PC-3 (cell line): ENCODE measurements at regions of chr6 and their contacts with region 1.

Region 1: GRCh38 chr6:26196846-26197648 is 109.8 kb downstream of the HFE start:
- DNase-seq: peak; percentile 93
- ATAC-seq: peak; percentile 48
- H3K4me3 ChIP-seq: peak overlapping the region; percentile 93
- H3K27ac ChIP-seq: peak overlapping the region; percentile 70
- H3K4me1 ChIP-seq: peaks cover 17% of the 10 kb centered on the region; the same call in 1 of the 2 replicates
- H3K27me3 ChIP-seq: no peaks in the 10 kb centered on the region
- CTCF ChIP-seq: no peak; the same call in 1 of the 2 replicates

Region 2: DNA sequence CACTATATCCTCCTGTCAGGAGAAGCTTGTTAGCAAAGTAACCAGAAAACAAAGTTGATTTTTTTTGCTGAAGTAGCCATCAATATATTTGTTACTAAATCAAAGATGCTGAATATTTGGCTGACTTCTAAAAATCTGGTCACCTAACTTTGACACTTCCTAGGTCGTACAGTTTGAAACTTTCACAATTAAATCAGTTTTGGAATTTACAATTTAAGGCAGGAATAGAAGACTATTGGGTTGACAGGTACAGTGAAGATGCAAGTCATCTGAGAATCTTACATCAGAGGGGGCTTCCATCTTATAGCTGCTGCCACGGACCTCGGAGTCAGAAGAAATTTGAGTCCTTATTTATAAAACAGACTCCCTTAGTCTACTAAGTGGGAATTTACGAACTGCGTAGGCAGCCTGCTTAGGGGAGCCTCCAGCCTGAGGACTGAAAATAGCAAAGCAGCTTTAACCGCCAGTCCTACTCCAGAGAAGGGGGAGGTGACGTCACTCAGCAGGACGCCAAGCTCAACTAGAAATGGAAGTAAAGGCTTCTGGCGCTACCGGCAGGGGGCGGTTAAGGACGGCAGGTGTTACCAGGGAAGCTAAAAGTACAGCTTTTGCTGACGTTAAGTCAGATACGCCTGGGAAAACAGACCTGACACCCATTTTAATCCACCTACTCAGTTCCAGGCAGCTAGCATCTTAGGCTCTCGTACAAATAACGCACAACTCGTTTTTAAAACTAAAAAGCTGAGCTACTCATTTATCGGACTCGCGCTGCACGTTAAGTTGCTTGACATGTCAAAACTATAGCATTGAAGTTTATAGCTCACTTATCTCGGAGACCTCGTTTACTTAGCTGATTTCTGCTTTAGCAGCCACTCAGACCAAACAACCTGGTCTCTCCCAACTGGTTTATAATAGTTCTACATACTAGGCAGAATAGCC is 170.9 kb before region 1 on chr6:
- CTCF ChIA-PET with region 1: interaction called, 3 read pairs
- POLR2A ChIA-PET with region 1: interaction called, 4 read pairs
- intact Hi-C with region 1: loop called (anchors 5 kb)
- DNase-seq: peak; percentile 96
- ATAC-seq: peak; percentile 37
- H3K4me3 ChIP-seq: peak overlapping the region; percentile 73
- H3K27ac ChIP-seq: peak overlapping the region; percentile 56
- H3K4me1 ChIP-seq: peaks cover 60% of the 10 kb centered on the region
- H3K27me3 ChIP-seq: no peaks in the 10 kb centered on the region
- CTCF ChIP-seq: peak; percentile 85

Region 3: DNA sequence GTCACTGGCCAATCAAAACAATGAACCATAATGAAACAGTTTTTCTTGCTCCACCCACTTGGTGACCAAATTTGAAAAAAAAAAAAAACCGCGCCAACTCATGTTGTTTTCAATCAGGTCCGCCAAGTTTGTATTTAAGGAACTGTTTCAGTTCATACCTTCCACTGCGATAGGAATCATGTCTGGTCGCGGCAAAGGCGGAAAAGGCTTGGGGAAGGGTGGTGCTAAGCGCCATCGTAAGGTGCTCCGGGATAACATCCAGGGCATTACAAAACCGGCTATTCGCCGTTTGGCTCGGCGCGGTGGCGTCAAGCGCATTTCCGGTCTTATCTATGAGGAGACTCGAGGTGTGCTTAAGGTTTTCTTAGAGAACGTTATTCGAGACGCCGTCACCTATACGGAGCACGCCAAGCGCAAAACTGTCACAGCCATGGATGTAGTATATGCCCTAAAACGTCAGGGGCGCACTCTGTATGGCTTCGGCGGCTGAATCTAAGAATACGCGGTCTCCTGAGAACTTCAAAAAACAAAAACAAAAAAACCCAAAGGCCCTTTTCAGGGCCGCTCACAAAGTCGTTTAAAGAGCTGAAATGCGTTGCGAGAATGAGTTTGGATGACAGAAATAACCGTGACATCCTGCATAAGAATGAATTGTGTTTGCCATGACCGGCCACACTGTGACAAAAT is 93.1 kb before region 1 on chr6:
- CTCF ChIA-PET with region 1: no interaction called
- POLR2A ChIA-PET with region 1: interaction called, 19 read pairs
- intact Hi-C with region 1: no loop called
- DNase-seq: peak; percentile 97
- ATAC-seq: peak; percentile 81
- H3K4me3 ChIP-seq: peak overlapping the region; percentile 68
- H3K27ac ChIP-seq: peak overlapping the region; percentile 84
- H3K4me1 ChIP-seq: peaks cover 28% of the 10 kb centered on the region
- H3K27me3 ChIP-seq: no peaks in the 10 kb centered on the region
- CTCF ChIP-seq: peak; percentile 46; the same call in 1 of the 2 replicates

Region 4: DNA sequence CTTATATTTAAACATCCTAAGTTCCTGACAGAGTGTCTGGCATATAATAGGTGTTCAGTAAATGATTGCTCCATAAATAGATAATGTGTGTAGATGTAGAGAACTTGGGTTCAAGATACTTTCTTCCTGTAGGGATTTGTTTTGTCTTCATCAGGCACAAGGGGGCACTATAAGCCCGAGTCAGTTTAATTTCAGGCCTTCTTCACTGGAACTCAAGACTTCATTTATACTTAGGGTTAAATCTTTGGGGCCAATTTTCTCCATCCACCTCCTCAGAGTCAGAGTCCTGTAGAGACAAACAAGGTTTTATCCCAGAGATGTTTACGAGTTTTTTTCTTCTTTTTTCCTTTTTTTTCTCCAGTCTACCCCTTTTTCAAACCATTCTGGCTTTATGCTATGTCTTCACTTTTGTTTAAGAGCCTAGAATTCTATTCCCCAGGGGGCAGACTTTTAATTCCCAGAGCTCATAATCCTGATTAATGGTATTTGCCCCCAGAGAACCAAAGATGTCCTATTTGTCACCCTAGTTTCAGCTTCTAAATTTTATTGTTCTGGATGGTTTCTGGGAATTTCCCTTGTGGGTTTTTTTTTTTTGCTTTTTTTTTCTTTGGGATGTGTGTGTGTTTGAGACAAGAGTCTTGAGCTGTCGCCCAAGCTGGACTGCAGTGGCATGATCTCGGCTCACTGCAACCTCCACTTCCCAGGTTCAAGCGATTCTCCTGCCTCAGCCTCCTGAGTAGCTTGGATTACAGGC is 21.4 kb before region 1 on chr6:
- CTCF ChIA-PET with region 1: interaction called, 4 read pairs
- POLR2A ChIA-PET with region 1: interaction called, 6 read pairs
- intact Hi-C with region 1: loop called (anchors 2 kb)
- DNase-seq: peak; percentile 71
- ATAC-seq: peak; percentile 57
- H3K4me3 ChIP-seq: no peak overlapping the region
- H3K27ac ChIP-seq: no peak overlapping the region
- H3K4me1 ChIP-seq: no peaks in the 10 kb centered on the region
- H3K27me3 ChIP-seq: no peaks in the 10 kb centered on the region
- CTCF ChIP-seq: peak; percentile 81

Region 5: GRCh38 chr6:26234421-26235296 is 37.6 kb after region 1 on chr6:
- CTCF ChIA-PET with region 1: no interaction called
- POLR2A ChIA-PET with region 1: interaction called, 37 read pairs
- intact Hi-C with region 1: no loop called
- DNase-seq: peak; percentile 97
- ATAC-seq: peak; percentile 69
- H3K4me3 ChIP-seq: peak overlapping the region; percentile 68
- H3K27ac ChIP-seq: peak overlapping the region; percentile 79
- H3K4me1 ChIP-seq: peaks cover 40% of the 10 kb centered on the region
- H3K27me3 ChIP-seq: no peaks in the 10 kb centered on the region
- CTCF ChIP-seq: no peak

Region 6: DNA sequence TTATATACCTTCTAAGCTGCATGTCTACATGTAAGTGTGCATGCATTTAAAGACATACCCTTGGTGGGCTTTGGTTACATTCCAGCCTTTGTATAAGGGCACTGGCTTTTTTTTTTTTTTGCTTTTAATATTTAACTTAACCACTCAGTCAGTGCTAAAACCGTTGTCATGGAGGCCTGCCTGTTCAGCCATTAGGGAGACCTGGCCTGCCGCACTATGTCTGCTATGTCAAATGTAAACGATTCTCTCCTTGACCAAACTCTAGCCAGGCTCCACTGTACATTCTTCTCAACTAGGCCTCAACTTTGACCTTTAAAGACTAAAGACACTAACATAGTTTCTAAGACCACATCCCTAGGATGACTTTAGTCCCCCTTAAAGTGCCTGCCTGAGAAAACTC is 119.2 kb after region 1 on chr6:
- CTCF ChIA-PET with region 1: no interaction called
- POLR2A ChIA-PET with region 1: no interaction called
- intact Hi-C with region 1: no loop called
- DNase-seq: no peak
- ATAC-seq: no peak
- H3K4me3 ChIP-seq: no peak overlapping the region
- H3K27ac ChIP-seq: no peak overlapping the region
- H3K4me1 ChIP-seq: peaks cover 7% of the 10 kb centered on the region; the same call in 1 of the 2 replicates
- H3K27me3 ChIP-seq: no peaks in the 10 kb centered on the region
- CTCF ChIP-seq: no peak

Region 7: DNA sequence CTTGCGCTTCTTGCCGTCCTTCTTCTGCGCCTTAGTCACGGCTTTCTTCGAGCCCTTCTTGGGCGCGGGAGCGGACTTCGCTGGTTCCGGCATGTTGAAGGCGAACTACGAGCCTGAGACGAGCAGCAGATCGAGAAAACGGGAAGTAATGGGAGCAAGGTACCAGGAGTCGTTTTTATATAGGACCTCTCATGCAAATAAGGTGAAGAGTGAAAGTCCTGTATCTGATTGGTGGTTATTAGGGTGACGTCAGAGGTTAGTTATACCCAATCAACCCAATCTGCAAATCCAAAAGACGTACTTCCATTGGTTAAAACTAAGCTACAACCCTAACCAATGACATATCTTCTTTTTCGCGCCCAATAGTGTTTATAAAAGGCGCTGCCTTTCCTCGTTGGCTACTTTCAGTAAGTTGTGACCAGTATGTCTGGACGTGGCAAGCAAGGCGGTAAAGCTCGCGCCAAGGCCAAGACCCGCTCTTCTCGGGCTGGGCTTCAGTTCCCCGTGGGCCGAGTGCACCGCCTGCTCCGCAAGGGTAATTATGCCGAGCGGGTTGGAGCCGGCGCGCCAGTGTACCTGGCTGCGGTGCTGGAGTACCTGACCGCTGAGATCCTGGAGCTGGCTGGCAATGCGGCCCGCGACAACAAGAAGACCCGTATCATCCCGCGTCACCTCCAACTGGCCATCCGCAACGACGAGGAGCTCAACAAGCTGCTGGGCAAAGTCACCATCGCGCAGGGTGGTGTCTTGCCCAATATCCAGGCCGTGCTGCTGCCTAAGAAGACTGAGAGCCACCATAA is 949.9 kb after region 1 on chr6:
- CTCF ChIA-PET with region 1: no interaction called
- POLR2A ChIA-PET with region 1: no interaction called
- intact Hi-C with region 1: loop called (anchors 5 kb)
- DNase-seq: peak; percentile 98
- ATAC-seq: peak; percentile 70
- H3K4me3 ChIP-seq: peak overlapping the region; percentile 82
- H3K27ac ChIP-seq: peak overlapping the region; percentile 86
- H3K4me1 ChIP-seq: peaks cover 22% of the 10 kb centered on the region; the same call in 1 of the 2 replicates
- H3K27me3 ChIP-seq: no peaks in the 10 kb centered on the region
- CTCF ChIP-seq: no peak